Activated CD8-positive, alpha-beta T cell treated with anti-CD3 and anti-CD28 coated beads for 36 hours (primary cell): ENCODE measurements at regions of chr14 and their contacts with region 1.

Region 1: DNA sequence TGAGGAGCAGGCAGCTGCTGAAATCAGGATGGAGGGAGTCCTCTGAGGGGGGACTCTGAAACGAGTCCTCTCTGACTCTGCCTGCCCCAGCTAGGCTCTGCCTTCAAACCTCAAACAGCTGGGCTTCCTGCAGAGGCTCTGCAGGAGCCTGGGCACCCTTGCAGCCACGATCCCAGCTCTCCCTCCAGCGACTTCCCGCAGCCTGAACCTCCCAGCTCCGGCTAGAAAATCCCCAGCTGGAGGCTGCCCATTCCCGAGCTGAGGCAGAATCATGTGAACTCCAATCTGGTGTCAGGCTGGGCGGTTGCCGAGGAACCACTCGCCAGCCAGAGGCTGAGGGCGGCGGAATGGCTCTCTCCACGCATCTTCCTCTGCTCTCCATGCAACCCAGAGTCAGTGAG is at the start of gene GPR68:
- DNase-seq: peak; percentile 49
- ATAC-seq: no peak
- H3K4me3 Mint-ChIP-seq: peak within 1 kb of the TSS; percentile 80
- H3K27ac Mint-ChIP-seq: peak within 1 kb of the TSS; percentile 97
- H3K4me1 Mint-ChIP-seq: peaks cover 87% of the 10 kb centered on the region
- H3K27me3 Mint-ChIP-seq: no peaks in the 10 kb centered on the region
- CTCF ChIP-seq: no peak
- total RNA-seq, gene GPR68: 11.9 to 14.0 TPM

Region 2: GRCh38 chr14:91114079-91115065 is 130.1 kb before region 1 on chr14:
- CTCF ChIA-PET with region 1: no interaction called
- POLR2A ChIA-PET with region 1: interaction called, 24 read pairs
- intact Hi-C with region 1: no loop called
- DNase-seq: peak; percentile 84
- ATAC-seq: peak; percentile 84
- H3K4me3 Mint-ChIP-seq: peak overlapping the region; percentile 92
- H3K27ac Mint-ChIP-seq: peak overlapping the region; percentile 92
- H3K4me1 Mint-ChIP-seq: peaks cover 57% of the 10 kb centered on the region
- H3K27me3 Mint-ChIP-seq: no peaks in the 10 kb centered on the region
- CTCF ChIP-seq: no peak

Region 3: GRCh38 chr14:91164685-91165084 is 79.8 kb before region 1 on chr14:
- CTCF ChIA-PET with region 1: no interaction called
- POLR2A ChIA-PET with region 1: no interaction called
- intact Hi-C with region 1: no loop called
- DNase-seq: no peak
- ATAC-seq: no peak
- H3K4me3 Mint-ChIP-seq: no peak overlapping the region
- H3K27ac Mint-ChIP-seq: peak overlapping the region; percentile 2
- H3K4me1 Mint-ChIP-seq: no peaks in the 10 kb centered on the region
- H3K27me3 Mint-ChIP-seq: no peaks in the 10 kb centered on the region
- CTCF ChIP-seq: no peak

Region 4: GRCh38 chr14:91193069-91193468 is 51.4 kb before region 1 on chr14:
- CTCF ChIA-PET with region 1: no interaction called
- POLR2A ChIA-PET with region 1: interaction called, 21 read pairs
- intact Hi-C with region 1: no loop called
- DNase-seq: no peak
- ATAC-seq: no peak
- H3K4me3 Mint-ChIP-seq: no peak overlapping the region
- H3K27ac Mint-ChIP-seq: no peak overlapping the region
- H3K4me1 Mint-ChIP-seq: peaks cover 24% of the 10 kb centered on the region
- H3K27me3 Mint-ChIP-seq: no peaks in the 10 kb centered on the region
- CTCF ChIP-seq: no peak

Region 5: DNA sequence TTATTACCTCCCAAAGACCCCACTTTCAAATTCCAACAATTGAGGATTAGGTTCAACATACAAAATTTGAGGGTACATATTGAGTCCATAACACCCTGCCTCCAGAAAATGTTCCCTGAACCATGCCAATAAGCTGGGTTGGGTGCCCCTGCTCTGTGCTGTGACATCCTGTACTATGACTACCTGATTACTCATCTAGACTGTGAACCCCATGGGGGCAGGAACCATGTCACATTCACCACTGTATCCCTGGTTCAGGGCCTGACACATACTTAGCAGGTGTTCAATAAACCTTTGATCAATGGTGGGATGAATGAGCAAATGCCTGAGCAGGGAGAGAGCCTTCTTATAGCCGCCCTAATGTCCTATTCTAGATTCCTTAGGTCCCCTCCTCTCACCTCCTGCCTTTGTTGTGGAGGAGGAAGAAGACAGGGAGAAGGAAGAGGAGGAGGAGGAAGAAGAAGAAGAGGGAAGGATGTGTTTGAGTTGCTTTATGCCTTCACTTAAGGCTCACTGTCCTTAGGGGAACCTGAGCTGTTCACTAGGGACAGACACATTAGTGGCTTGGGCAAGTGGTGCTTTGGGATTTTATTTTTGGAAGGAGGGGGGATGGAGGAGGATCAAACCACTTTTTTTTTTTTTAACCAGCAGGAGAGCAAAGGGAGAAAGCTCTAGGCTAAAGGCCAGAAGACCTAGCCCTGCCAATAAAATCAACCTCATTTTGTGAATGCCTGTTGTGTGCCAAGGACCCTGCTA is 21.3 kb before region 1 on chr14:
- CTCF ChIA-PET with region 1: interaction called, 58 read pairs
- POLR2A ChIA-PET with region 1: interaction called, 274 read pairs
- intact Hi-C with region 1: loop called (anchors 1 kb)
- DNase-seq: peak; percentile 66
- ATAC-seq: peak; percentile 52
- H3K4me3 Mint-ChIP-seq: no peak overlapping the region
- H3K27ac Mint-ChIP-seq: peak overlapping the region; percentile 77
- H3K4me1 Mint-ChIP-seq: peaks cover 70% of the 10 kb centered on the region
- H3K27me3 Mint-ChIP-seq: no peaks in the 10 kb centered on the region
- CTCF ChIP-seq: no peak

Region 6: DNA sequence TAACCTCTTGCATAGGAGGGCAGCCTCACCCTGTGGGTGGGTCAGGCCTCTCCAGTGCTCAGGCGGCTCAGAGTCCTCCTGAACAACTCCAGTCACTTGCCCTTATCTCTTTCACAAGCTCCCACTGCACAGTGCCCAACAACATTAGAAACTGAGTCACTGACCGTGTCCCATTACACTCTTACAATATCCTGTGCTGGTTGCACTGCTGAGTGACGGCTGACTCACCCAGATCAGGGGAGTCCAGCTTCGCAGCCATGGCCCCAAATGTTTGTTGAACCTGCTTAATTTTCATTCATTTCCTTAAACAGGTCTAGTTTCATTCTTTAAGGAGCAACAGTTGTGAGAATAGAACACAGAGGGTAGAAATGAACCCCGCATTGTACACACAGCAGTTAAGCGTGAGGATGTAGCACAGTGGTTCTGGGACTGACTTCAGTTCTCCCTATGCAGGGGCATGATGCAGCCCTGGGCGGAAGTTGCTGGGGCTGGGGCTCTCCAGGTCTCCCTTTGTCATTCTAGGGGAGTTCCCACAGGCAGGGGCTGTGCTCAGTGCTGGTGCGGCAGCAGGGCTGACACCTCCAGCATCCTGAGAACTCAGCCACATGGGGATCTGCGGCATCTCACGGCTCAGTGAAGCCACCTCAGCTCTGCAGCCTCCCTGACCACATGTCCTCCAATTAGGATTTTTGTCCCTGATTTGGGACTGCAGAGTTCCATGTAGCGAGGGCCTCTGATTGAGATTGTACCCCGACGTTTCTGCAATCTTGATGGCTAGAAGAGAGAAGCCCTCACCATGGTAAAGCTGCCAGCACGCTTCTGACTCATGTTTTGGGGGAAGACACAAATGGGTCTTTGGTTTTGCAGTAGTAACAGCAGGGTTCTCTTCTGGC is 16.1 kb before region 1 on chr14:
- CTCF ChIA-PET with region 1: interaction called, 58 read pairs
- POLR2A ChIA-PET with region 1: interaction called, 274 read pairs
- intact Hi-C with region 1: loop called (anchors 1 kb)
- DNase-seq: peak; percentile 96
- ATAC-seq: peak; percentile 84
- H3K4me3 Mint-ChIP-seq: peak overlapping the region; percentile 68
- H3K27ac Mint-ChIP-seq: peak overlapping the region; percentile 99
- H3K4me1 Mint-ChIP-seq: peaks cover 87% of the 10 kb centered on the region
- H3K27me3 Mint-ChIP-seq: no peaks in the 10 kb centered on the region
- CTCF ChIP-seq: no peak

Region 7: GRCh38 chr14:91264151-91265150 is 19.9 kb after region 1 on chr14:
- CTCF ChIA-PET with region 1: interaction called, 5 read pairs
- POLR2A ChIA-PET with region 1: interaction called, 103 read pairs
- intact Hi-C with region 1: no loop called
- DNase-seq: peak; percentile 32
- ATAC-seq: peak; percentile 32
- H3K4me3 Mint-ChIP-seq: peak overlapping the region; percentile 54
- H3K27ac Mint-ChIP-seq: peak overlapping the region; percentile 63
- H3K4me1 Mint-ChIP-seq: peaks cover 51% of the 10 kb centered on the region
- H3K27me3 Mint-ChIP-seq: no peaks in the 10 kb centered on the region
- CTCF ChIP-seq: no peak

Region 8: GRCh38 chr14:91286530-91286937 is 42.0 kb after region 1 on chr14:
- CTCF ChIA-PET with region 1: interaction called, 11 read pairs
- POLR2A ChIA-PET with region 1: interaction called, 4 read pairs
- intact Hi-C with region 1: no loop called
- DNase-seq: peak; percentile 90
- ATAC-seq: peak; percentile 85
- H3K4me3 Mint-ChIP-seq: no peak overlapping the region
- H3K27ac Mint-ChIP-seq: peak overlapping the region; percentile 82
- H3K4me1 Mint-ChIP-seq: peaks cover 15% of the 10 kb centered on the region
- H3K27me3 Mint-ChIP-seq: no peaks in the 10 kb centered on the region
- CTCF ChIP-seq: peak; percentile 96